ENCODE measurements at regions of chr13 and their contacts with region 1.

Region 1: GRCh38 chr13:50685491-50685890 is 158.0 kb downstream of the DLEU7 start:
- DNase-seq: peak; percentile 84 to 94 (median 92)
- ATAC-seq: peak; percentile 65 to 85
- H3K4me3 ChIP-seq: peak overlapping the region; percentile 42
- H3K27ac ChIP-seq: peak overlapping the region; percentile 12
- H3K4me1 ChIP-seq: peaks cover 6% of the 10 kb centered on the region
- H3K27me3 ChIP-seq: no peaks in the 10 kb centered on the region

Region 2: DNA sequence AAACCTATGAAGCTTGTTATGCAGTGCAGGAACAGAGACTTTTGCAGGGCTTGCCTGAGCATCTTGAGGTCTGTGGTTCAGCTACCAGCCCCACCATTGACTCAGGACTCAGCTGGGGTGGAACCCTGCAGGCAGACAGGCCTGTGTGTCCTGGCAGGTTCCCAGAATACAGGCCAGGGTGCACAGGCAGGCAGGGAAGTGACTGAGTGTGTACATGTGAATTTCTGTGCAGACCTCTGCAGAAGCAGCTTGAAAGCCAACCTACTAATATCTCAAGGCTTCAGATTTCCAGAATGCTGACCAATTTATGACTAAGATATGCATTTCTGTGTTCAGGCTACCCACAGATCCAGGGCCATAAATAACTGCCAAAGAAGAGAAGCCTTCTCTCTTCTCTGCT is 96.4 kb before region 1 on chr13:
- intact Hi-C with region 1: loop called in 1 of 4 experiments (anchors 10 kb)
- DNase-seq: no peak
- ATAC-seq: peak in 1 of 2 donors; percentile 28
- H3K4me3 ChIP-seq: no peak overlapping the region
- H3K27ac ChIP-seq: no peak overlapping the region
- H3K4me1 ChIP-seq: peaks cover 6% of the 10 kb centered on the region
- H3K27me3 ChIP-seq: no peaks in the 10 kb centered on the region